Vagina (tissue), 2 donors: ENCODE measurements at regions of chrX and their contacts with region 1.

Region 1: DNA sequence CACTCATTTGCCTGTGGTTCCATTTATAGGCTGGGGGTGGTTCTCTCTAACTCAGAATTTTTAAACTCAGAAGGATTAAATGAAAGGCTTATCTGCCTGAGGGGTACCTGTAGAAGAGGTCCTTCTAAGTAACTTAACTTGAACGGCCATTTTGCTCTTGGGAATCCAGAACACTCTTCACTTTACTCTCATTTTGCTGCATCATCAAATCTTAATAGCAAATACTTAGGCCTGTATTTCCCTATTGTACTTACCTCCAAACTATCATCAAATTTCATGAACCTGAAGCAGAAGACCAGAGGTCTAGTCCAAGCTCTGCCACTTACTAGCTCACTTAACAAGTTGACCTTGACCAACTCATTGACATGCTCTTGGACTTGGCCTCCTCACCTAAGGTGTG is 70.4 kb downstream of the GRIA3 start:
- DNase-seq: no peak
- H3K4me3 ChIP-seq: no peak overlapping the region
- H3K27ac ChIP-seq: no peak overlapping the region
- H3K4me1 ChIP-seq: no peaks in the 10 kb centered on the region
- H3K27me3 ChIP-seq: no peaks in the 10 kb centered on the region
- CTCF ChIP-seq: no peak
- POLR2A ChIP-seq: no peak

Region 2: GRCh38 chrX:123298026-123298425 is 43.6 kb after region 1 on chrX:
- intact Hi-C with region 1: loop called (anchors 2 kb)
- DNase-seq: no peak
- H3K4me3 ChIP-seq: no peak overlapping the region
- H3K27ac ChIP-seq: no peak overlapping the region
- H3K4me1 ChIP-seq: no peaks in the 10 kb centered on the region
- H3K27me3 ChIP-seq: no peaks in the 10 kb centered on the region
- CTCF ChIP-seq: no peak
- POLR2A ChIP-seq: no peak

Region 3: DNA sequence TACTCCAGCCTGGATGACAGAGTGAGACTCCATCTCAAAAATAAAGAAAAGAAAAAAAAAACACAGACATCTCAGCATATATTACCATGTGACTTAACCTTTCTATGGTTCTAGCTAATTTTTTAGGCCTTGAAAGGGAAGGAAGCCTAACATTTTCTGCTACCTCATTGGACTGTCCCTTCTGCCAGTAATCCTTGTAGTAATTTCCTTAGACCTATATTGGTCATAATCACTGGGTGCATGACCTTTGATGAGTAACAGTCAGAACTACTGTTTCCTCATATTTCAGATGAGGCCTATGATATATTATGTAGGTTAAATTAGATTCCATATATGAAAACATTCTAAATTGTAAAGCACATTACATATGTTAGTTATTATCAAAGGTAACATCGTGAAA is 615.0 kb after region 1 on chrX:
- intact Hi-C with region 1: no loop called
- DNase-seq: no peak
- H3K4me3 ChIP-seq: no peak overlapping the region
- H3K27ac ChIP-seq: no peak overlapping the region
- H3K4me1 ChIP-seq: no peaks in the 10 kb centered on the region
- H3K27me3 ChIP-seq: no peaks in the 10 kb centered on the region
- CTCF ChIP-seq: no peak
- POLR2A ChIP-seq: no peak